ENCODE measurements at regions of chr2 and their contacts with region 1.

Region 1: DNA sequence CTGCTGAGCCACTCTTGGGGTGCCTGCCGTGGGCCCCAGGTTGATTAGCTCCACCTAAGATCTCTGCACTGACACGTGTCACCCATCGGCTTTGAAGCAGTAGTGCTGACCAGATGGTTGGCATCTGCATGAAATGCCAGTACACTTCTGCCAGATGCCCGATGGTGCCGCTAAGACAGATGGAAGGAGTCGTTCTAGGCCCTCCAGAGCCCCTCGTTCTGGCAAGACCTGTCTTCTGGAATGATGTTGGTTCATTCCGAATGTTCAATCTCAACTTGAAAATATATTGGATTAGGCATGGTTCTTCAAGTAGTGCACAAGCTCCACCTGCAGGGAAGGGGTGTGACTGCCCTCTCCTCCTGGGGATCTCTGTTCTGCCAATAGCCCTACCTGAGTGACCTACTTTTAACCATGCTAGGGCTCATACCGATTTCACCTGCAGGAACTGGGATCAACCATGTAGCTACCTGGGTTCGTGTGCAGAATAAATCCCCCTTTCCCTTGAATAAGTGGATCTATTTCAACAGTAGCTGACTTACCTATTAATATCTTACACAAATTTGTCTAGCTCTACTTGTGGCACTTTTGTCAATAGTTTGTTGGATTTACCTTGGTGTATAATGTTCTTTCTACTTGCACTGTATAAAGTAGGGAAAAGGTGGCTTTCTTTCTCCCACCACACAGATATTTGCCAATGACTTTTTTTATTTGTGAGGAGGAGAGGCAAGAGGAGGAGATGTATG is 342.6 kb downstream of the CTNNA2 start:
- DNase-seq: peak; percentile 67
- ATAC-seq: peak; percentile 98
- H3K4me3 Mint-ChIP-seq: no peak overlapping the region
- H3K27ac Mint-ChIP-seq: peak overlapping the region; percentile 11; the same call in 1 of the 2 replicates
- H3K4me1 Mint-ChIP-seq: peaks cover 54% of the 10 kb centered on the region
- H3K27me3 Mint-ChIP-seq: no peaks in the 10 kb centered on the region
- CTCF ChIP-seq: peak; percentile 33

Region 2: GRCh38 chr2:79530443-79530842 is 325.0 kb before region 1 on chr2:
- CTCF ChIA-PET with region 1: interaction called, 18 read pairs
- POLR2A ChIA-PET with region 1: interaction called, 3 read pairs
- DNase-seq: no peak
- ATAC-seq: peak; percentile 77
- H3K4me3 Mint-ChIP-seq: no peak overlapping the region
- H3K27ac Mint-ChIP-seq: no peak overlapping the region
- H3K4me1 Mint-ChIP-seq: peaks cover 8% of the 10 kb centered on the region
- H3K27me3 Mint-ChIP-seq: no peaks in the 10 kb centered on the region
- CTCF ChIP-seq: no peak

Region 3: DNA sequence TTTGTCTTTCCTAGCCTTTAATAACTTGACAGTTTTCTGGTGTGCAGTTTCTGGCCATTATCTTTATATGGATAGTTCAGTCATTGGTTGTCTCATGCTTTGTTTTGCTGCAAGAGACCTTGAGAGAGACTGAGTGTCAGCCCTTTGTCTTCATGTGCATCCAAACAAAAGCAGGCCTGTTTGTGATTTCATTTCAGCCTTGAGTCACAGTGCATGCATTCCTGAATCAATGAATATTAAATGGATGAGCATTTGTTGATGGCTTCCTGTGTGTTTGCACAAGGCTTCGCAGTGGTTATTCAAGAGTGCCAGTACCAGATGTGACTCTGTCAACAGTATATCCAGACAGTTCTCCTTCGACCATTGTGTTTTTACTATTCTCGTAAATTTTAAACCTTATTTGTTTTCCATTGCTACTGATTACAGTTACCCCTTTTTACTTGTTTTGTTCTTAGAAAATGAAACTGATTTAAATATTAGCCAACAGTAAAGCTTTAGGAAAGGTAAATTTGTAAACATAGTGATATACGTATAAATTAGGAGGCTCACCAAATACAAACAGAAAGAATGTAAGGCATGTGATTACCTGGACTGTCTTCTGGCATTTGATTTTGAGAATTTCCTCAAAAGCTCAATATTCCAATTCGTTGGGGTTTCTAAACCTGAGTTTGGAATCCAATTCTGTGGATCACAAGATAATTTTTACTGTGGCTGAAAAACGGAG is 22.8 kb before region 1 on chr2:
- CTCF ChIA-PET with region 1: no interaction called
- POLR2A ChIA-PET with region 1: no interaction called
- DNase-seq: no peak
- ATAC-seq: peak; percentile 85
- H3K4me3 Mint-ChIP-seq: peak overlapping the region; percentile 44
- H3K27ac Mint-ChIP-seq: peak overlapping the region; percentile 99
- H3K4me1 Mint-ChIP-seq: peaks cover 69% of the 10 kb centered on the region
- H3K27me3 Mint-ChIP-seq: no peaks in the 10 kb centered on the region
- CTCF ChIP-seq: no peak

Measured in WTC11 (cell line).